ENCODE measurements at regions of chr1 and their contacts with region 1.

Region 1: GRCh38 chr1:68819190-68819829 is 322.4 kb upstream of the DEPDC1 start:
- DNase-seq: no peak
- ATAC-seq: peak; percentile 78; the same call in 1 of the 2 replicates
- H3K4me3 ChIP-seq: no peak overlapping the region
- H3K27ac ChIP-seq: no peak overlapping the region
- H3K4me1 ChIP-seq: no peaks in the 10 kb centered on the region
- H3K27me3 ChIP-seq: no peaks in the 10 kb centered on the region
- CTCF ChIP-seq: peak; percentile 45

Region 2: GRCh38 chr1:69737527-69738185 is 918.3 kb after region 1 on chr1:
- CTCF ChIA-PET with region 1: no interaction called
- POLR2A ChIA-PET with region 1: no interaction called
- in situ Hi-C with region 1: no loop called
- intact Hi-C with region 1: loop called (anchors 1 kb)
- DNase-seq: peak; percentile 42
- ATAC-seq: peak; percentile 84
- H3K4me3 ChIP-seq: no peak overlapping the region
- H3K27ac ChIP-seq: no peak overlapping the region
- H3K4me1 ChIP-seq: no peaks in the 10 kb centered on the region
- H3K27me3 ChIP-seq: 0 out of 2 replicates have a peak, but pooled peaks cover 2% of the 10 kb centered on the region
- CTCF ChIP-seq: peak; percentile 72

Measured in Panc1 (cell line).